A549 (cell line): ENCODE measurements at regions of chr5 and their contacts with region 1.

Region 1: DNA sequence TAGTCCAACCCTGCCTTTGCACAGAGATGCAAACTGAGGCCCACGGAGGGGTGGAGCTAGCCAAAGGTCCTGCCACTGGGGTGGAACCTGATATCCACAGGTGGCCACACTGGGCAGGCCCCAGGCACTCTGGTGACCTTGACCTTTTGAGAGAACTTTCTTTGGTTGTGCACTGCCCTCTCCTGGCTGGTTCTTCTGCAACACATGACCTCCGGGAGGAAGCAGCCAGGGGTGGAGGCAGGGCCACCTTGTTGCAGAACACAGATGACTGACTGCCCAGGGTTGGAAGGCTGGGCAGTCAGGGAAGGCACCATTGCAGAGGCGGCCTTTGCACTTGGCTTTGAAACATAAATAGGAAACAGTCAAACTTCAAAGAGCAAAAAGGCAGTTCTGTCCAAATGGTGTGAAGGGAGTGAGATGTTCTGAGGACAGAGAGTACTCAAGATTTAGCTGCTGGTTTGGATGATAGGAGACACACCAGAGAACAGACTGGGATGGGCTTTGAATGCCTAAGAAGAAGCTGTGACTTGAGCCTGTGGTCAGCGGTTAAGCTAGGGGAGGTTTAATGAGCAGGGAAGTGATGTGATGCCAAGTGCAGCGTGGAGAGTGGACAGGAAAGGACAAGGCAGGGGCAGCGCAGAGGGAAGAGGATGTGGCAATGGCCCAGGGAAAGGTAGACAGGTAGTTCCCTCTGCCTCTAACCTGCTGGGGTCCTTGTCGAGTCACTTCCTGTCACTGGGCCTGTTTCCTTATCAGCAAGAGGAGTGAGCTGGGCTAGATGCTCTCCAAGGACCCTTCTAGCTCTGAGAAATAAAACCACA is 6.8 kb upstream of the TCOF1 start:
- DNase-seq: peak; percentile 83 to 84
- ATAC-seq: peak; percentile 94 to 96
- H3K4me3 ChIP-seq: no peak overlapping the region
- H3K27ac ChIP-seq: peak overlapping the region; percentile 46 to 72; a peak in 5 of 6 replicates
- H3K4me1 ChIP-seq: peaks cover 24% of the 10 kb centered on the region
- CTCF ChIP-seq: peak; percentile 93
- EP300 ChIP-seq: no peak
- POLR2A ChIP-seq: no peak
- RAD21 ChIP-seq: peak; percentile 97

Region 2: DNA sequence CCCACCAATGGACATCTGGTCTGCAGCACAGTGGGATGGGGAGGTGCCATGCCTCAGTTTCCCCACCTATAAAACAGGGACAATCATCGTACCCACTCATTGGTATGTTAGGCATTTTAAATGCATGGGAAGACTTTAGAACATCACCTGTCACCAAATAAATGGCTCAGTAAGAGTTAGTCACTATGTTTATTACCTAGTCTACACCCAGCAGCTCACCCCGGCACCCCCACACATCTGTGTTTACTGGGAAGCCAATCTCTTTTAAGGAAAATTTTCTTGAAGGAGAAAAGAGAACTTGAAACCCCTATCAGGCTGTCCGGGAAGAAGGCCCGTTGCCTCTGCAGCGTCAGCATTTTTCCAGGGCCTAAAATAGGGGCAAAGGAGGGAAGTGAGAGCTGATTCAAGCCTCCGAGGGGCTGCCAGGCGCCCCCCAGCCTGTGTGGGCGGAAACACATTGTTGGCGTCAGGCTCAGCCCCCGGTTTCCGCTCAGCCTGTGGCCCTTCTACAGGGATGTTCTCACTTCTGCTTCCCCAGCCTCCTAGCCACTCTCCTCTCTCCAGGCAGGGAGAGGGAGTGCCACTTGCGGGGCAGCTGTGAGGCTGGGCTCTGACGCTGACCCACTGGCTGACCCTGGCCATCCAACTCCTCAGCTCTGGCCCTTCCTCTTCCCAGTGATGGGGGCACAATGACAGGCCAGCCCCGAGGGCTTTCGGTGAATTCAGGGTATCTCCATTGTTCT is 269.0 kb before region 1 on chr5:
- CTCF ChIA-PET with region 1: no interaction called
- POLR2A ChIA-PET with region 1: no interaction called
- DNase-seq: no peak
- ATAC-seq: peak in 1 of 2 experiments; percentile 53; a peak in 3 of 6 replicates
- H3K4me3 ChIP-seq: no peak overlapping the region
- H3K27ac ChIP-seq: no peak overlapping the region
- H3K4me1 ChIP-seq: no peaks in the 10 kb centered on the region
- CTCF ChIP-seq: no peak
- EP300 ChIP-seq: no peak
- POLR2A ChIP-seq: no peak
- RAD21 ChIP-seq: no peak

Region 3: GRCh38 chr5:150137168-150137957 is 213.4 kb before region 1 on chr5:
- CTCF ChIA-PET with region 1: interaction called, 14 read pairs
- POLR2A ChIA-PET with region 1: no interaction called
- DNase-seq: no peak
- ATAC-seq: no peak
- H3K4me3 ChIP-seq: no peak overlapping the region
- H3K27ac ChIP-seq: peak overlapping the region; percentile 9 to 93; a peak in 3 of 6 replicates
- H3K4me1 ChIP-seq: peaks cover 46% of the 10 kb centered on the region
- CTCF ChIP-seq: no peak
- EP300 ChIP-seq: no peak
- POLR2A ChIP-seq: no peak
- RAD21 ChIP-seq: no peak

Region 4: DNA sequence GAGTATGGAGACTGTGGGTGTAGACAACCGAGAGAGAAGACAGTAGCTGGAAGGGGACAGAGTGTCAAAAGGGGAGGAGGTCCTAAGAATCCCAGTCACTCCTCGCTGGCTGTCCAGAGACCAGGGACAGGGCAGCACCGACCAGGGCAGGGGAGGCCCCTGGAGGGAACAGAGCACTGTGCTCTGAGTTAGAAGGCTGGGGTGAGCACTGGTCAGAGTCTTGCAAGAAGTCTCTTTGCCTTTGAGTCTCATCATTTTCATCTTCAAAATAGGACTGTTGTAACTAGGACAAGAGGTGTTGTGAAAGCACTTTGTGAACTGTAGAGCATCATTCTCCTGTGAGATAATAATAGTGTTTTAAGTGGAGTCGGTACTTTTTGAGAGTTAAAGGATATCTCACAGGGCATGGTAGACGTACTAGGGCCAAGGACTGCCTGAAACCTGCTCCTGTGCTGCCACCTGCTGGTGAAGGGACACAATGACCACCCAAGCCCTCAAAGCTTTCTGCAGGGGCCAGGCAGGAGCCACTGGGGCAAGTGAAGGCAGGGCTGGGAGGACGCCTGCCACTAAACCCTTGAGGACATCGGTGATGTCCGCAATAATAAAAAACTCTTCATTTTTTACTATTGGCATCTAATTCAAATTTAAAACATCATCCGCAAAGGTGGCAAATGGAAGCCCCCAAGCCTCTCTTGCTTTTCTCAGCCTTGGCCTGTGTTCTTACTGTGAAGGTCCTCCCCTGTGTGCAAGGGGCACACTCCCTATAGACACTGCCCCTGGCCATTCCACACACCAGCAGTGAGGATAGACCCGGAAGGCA is 132.7 kb before region 1 on chr5:
- CTCF ChIA-PET with region 1: interaction called, 26 read pairs
- POLR2A ChIA-PET with region 1: no interaction called
- DNase-seq: peak; percentile 81 to 86
- ATAC-seq: peak; percentile 89 to 97
- H3K4me3 ChIP-seq: no peak overlapping the region
- H3K27ac ChIP-seq: 0 out of 6 replicates have a peak overlapping the region, but pooled peaks of 1 of the 2 experiments have one; percentile 28
- H3K4me1 ChIP-seq: no peaks in the 10 kb centered on the region
- CTCF ChIP-seq: peak; percentile 90
- EP300 ChIP-seq: no peak
- POLR2A ChIP-seq: no peak
- RAD21 ChIP-seq: peak; percentile 92 to 94

Region 5: DNA sequence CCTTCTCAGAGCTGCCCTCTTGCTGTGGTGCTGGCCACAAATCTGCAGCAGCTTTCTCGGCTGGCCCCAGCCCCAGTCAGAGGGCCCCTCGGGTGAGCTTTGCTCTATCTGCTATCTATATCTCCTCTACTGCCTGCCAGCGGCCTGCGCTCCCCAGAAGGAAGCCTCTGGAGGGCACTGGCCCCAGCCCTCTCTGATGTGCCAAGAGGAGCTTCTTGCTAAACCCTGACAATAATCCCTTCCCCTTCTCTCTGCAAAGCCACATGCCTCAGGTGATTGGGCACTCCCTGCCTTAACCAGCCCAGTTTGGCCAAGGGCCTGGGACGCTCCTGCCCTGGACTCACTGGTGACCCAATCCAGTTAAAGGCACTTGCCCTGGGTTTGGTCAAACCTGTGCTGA is 103.9 kb before region 1 on chr5:
- CTCF ChIA-PET with region 1: interaction called, 10 read pairs
- POLR2A ChIA-PET with region 1: no interaction called
- DNase-seq: no peak
- ATAC-seq: no peak
- H3K4me3 ChIP-seq: no peak overlapping the region
- H3K27ac ChIP-seq: no peak overlapping the region
- H3K4me1 ChIP-seq: no peaks in the 10 kb centered on the region
- CTCF ChIP-seq: no peak
- EP300 ChIP-seq: no peak
- POLR2A ChIP-seq: no peak
- RAD21 ChIP-seq: no peak

Region 6: DNA sequence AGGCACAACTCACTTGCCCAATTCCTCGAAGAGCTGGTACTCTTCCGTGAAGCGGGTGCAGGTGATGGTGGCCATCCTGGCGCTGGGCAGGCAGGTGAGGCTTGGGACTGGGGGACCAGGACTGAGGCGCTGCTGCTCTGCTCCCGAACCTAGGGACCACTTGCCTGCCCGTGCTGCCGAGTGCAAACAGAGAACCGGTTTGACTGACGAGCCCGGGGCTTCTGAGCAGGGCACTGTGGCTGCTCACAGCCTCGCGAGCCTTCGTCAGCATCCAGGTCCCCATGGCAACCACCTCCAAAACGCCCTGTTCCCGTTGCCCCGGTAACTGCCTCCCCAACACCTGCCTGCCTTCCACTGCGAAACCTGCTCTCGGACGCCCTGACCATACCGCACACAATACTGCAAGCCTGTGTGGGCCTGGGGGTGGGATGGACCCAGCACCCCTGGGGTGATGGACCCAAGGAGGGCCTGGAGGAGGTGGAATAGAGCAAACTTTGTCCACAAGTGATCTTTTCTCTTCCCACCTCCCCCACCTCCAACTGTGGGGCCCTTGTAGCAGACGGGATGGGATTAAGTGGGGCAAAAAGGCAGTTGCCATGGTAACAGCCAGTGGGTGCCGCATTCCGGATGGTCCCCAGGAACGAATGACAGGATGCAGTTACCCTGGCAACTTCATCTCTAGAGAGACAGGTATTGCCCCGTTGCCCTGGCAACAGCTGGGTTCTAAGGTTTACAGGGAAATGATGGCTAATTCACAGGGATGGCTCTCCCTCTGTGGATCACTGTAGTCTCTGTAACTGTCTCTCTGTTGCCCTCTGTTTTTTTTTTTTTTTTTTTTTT is 61.0 kb before region 1 on chr5 and contains the start of gene CAMK2A:
- CTCF ChIA-PET with region 1: interaction called, 25 read pairs
- POLR2A ChIA-PET with region 1: no interaction called
- DNase-seq: no peak
- ATAC-seq: no peak
- H3K4me3 ChIP-seq: no peak within 1 kb of the TSS
- H3K27ac ChIP-seq: no peak within 1 kb of the TSS
- H3K4me1 ChIP-seq: peaks cover 11% of the 10 kb centered on the region
- CTCF ChIP-seq: no peak
- EP300 ChIP-seq: no peak
- POLR2A ChIP-seq: no peak
- RAD21 ChIP-seq: no peak
- polyA plus RNA-seq, gene CAMK2A: 0.09 and 0.19 TPM in 2 replicates

Region 7: DNA sequence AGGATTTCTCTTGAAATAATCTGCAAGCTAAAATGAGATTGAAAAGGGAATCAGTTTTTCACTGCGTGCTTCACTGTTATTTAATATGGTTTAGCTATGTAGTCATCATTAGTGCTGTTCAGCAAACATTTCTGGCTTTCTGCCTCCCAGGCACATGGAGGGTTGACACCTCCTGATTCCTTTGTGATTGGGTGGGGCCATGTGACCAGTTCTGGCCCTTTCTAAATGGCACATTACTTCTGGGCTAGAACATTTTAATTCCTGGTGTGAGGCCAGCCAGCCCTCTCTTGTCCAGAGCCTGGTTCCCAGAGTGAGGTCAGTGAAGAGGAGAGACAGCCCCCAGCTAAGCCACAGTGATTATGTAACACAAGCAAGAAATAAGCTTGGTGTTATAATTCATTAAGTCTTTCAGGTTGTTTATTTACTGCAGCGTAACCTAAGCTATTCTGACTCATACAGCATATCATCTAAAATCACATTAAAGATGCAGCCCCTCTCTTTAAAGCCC is 30.6 kb before region 1 on chr5:
- CTCF ChIA-PET with region 1: interaction called, 15 read pairs
- POLR2A ChIA-PET with region 1: no interaction called
- DNase-seq: peak; percentile 50 to 68
- ATAC-seq: peak; percentile 20 to 32; a peak in 5 of 6 replicates
- H3K4me3 ChIP-seq: no peak overlapping the region
- H3K27ac ChIP-seq: peak overlapping the region; percentile 91 to 97
- H3K4me1 ChIP-seq: peaks cover 60% of the 10 kb centered on the region
- CTCF ChIP-seq: no peak
- EP300 ChIP-seq: peak in 1 of 2 experiments; percentile 23; a peak in 1 of 5 replicates
- POLR2A ChIP-seq: no peak
- RAD21 ChIP-seq: no peak

Region 8: GRCh38 chr5:150361301-150361700 is 10.6 kb after region 1 on chr5:
- CTCF ChIA-PET with region 1: interaction called, 10 read pairs
- POLR2A ChIA-PET with region 1: no interaction called
- DNase-seq: no peak
- ATAC-seq: no peak
- H3K4me3 ChIP-seq: no peak overlapping the region
- H3K27ac ChIP-seq: no peak overlapping the region
- H3K4me1 ChIP-seq: peaks cover 17% of the 10 kb centered on the region
- CTCF ChIP-seq: no peak
- EP300 ChIP-seq: no peak
- POLR2A ChIP-seq: no peak
- RAD21 ChIP-seq: no peak